GM13976 (cell line): ENCODE measurements at regions of chr2 and their contacts with region 1.

Region 1: DNA sequence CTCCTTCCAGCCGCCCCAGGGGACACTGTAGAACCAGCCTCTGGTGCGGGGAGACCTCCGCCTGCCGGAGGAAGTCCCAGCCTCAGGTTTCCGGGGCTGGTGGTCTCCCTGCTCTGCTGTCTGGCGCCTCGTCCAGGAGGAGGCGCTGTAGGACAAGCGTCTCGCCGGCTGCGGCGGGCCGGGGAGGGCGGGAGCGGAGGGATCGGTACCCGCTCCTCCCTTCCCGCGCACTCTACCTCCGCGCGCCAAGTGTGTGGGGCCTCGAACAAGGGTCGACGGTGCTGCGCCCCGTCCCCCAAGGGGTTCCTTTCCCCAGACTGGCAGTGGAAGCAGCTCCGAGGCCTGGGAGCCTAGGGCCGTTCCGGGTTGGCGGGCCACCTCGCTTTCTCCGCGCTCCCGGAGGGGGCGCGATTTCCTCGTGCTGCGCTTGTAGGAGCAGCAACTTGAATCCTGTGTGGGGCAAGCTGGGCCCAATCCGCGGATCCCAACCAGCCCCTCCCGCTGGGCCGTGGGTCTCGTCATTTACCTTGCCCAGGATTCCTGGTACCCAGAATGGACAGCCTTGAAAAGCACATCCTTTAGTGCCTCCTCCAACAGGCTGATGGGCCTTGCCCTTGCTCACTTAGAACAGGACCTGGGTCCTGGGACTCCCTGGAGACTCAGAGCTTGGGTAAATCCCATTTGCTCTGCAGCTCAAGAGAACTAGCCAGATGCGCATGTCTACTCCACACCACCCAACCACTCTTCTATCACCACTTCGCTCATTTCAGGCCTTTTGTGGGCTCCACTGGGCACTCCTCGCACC is 10.6 kb upstream of the HOXD4 start:
- DNase-seq: peak; percentile 94
- CTCF ChIP-seq: peak; percentile 95

Region 2: GRCh38 chr2:176297067-176297466 is 156.4 kb after region 1 on chr2:
- in situ Hi-C with region 1: no loop called
- DNase-seq: no peak
- CTCF ChIP-seq: no peak

Region 3: DNA sequence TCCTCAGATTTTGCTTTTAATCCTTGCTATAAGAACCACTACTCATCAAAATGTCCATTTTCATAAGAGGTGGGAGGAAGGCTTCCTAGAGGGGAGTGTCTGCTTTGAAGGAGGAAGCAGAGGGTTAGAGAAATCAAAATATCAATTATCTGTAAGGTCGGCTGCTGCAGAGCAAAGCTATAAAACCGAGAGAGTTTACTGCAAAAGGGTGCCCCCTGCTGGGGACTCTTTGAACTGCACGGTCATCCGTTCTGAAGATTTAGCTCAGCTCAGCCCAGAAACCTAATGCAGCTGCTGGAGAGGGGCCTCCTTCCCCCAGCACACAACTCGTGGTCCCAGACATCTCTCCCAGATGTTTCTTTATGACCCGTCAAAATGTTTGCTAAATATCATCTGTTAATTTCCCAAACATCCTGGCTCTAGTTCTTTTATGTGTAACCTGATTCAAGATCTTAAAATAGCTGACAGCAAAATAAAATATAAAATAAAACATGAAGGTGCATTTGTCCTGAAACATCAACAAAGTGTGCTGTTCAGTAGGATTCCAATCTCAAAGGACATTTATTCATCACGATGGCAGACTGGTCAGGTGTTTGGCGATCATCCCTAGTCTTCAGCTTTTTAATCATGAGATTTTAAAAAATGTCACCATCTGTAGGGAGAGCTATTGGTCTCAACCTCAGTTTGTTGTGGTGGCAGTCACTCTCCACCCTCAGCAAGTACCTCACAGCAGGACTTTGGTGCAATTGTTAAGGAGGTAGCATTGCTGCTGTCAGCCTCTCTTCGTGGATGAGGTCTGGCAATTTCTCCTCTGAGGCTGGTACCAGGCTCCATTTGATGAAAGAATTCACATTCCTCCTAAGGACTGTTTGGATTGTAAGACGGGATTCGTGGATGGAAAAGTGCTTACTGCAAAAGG is 314.4 kb after region 1 on chr2:
- in situ Hi-C with region 1: loop called (anchors 10 kb)
- DNase-seq: peak; percentile 55
- CTCF ChIP-seq: peak; percentile 70

Region 4: GRCh38 chr2:176554101-176555048 is 413.7 kb after region 1 on chr2:
- in situ Hi-C with region 1: loop called (anchors 10 kb)
- DNase-seq: peak; percentile 65
- CTCF ChIP-seq: peak; percentile 49

Region 5: DNA sequence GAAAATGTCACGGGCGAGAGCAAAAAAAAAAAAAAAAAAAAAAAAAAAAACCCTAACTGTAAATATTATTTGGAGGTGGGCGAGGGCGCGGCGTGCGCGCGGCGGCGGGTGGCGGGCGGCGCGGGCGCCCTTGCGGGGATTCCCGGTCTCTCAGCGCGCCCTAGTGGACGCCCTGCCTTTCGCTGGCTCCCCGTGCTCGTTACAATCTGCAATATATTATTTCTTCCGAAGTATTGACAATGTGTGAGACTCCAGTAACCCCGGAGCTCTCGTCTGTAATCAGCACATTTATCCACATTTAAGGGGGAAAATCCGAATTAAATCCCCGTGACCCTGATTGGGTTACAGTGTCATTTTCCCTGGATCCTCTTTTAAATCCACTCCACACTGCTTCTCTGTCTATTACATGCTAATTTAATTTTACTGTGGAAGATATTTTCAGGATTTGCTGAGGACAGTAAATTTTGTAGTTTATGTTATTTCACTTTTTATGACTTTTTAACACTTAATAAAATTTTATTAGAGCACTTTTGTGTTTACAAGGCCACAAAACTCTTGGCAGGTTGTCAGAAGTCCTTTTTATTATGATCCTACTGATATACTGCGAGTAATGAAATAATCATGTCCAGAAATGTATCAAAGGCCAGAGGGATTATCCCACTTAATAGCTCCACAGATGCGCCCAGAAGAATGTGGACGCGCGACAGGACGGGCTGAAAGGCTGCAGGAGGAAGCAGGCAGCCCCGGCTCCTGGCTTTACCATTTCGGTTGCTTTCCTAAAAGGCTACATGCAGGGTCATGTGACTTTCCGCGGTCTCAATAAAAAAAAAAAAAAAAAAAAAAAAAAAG is 497.7 kb after region 1 on chr2:
- in situ Hi-C with region 1: loop called (anchors 10 kb)
- DNase-seq: peak; percentile 87
- CTCF ChIP-seq: peak; percentile 85

Region 6: GRCh38 chr2:176814306-176815052 is 673.8 kb after region 1 on chr2:
- in situ Hi-C with region 1: loop called (anchors 25 kb)
- DNase-seq: peak; percentile 46
- CTCF ChIP-seq: peak; percentile 28